SK-N-SH (cell line): ENCODE measurements at regions of chr7 and their contacts with region 1.

Region 1: GRCh38 chr7:38318803-38319416 is 45.5 kb upstream of the TARP start:
- DNase-seq: peak; percentile 67
- H3K4me3 ChIP-seq: no peak overlapping the region
- H3K27ac ChIP-seq: no peak overlapping the region
- H3K4me1 ChIP-seq: peaks cover 0 to 8% of the 10 kb centered on the region in 2 experiments; a peak in 1 of 4 replicates
- H3K27me3 ChIP-seq: no peaks in the 10 kb centered on the region
- CTCF ChIP-seq: peak; percentile 72
- EP300 ChIP-seq: no peak
- RAD21 ChIP-seq: peak; percentile 85

Region 2: DNA sequence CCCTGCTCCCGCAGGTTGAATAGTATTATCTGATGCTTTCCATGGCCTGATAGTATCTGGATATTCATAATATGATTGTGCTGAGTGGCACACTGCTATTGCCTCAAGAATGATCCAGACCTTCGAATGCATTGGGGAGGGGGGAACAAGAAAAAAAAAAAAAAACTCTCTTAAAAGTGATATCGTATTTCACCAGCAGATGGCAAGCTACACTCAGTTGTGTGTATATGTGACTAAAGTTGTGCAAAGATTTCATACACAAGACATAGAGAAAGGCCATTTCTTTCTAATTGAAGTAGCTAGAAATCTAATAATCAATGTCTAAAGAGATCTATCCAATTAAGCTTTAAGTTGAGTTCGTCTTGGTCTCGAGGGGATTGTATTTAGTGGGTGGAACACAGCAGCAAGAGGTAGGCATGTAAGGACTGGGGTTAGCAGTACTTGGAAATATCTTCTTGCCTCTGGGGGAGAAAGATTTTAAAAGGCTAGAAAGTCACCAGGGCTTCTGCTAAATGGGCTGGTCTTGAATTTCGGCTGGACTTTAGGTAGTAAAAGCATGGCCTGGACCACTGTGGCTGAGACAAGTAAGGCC is 417.6 kb before region 1 on chr7:
- CTCF ChIA-PET with region 1: interaction called, 19 read pairs
- POLR2A ChIA-PET with region 1: no interaction called
- DNase-seq: peak; percentile 47
- H3K4me3 ChIP-seq: peak overlapping the region in 1 of 2 experiments; percentile 4; a peak in 1 of 4 replicates
- H3K27ac ChIP-seq: no peak overlapping the region
- H3K4me1 ChIP-seq: peaks cover 0 to 8% of the 10 kb centered on the region in 2 experiments; a peak in 3 of 4 replicates
- H3K27me3 ChIP-seq: no peaks in the 10 kb centered on the region
- CTCF ChIP-seq: peak; percentile 83
- EP300 ChIP-seq: no peak
- RAD21 ChIP-seq: peak; percentile 85

Region 3: GRCh38 chr7:38222481-38223096 is 96.3 kb before region 1 on chr7:
- CTCF ChIA-PET with region 1: interaction called, 59 read pairs
- POLR2A ChIA-PET with region 1: no interaction called
- DNase-seq: peak; percentile 50
- H3K4me3 ChIP-seq: no peak overlapping the region; a peak in 1 of 4 replicates
- H3K27ac ChIP-seq: no peak overlapping the region
- H3K4me1 ChIP-seq: no peaks in the 10 kb centered on the region
- H3K27me3 ChIP-seq: no peaks in the 10 kb centered on the region
- CTCF ChIP-seq: peak; percentile 98
- EP300 ChIP-seq: no peak
- RAD21 ChIP-seq: peak; percentile 93

Region 4: DNA sequence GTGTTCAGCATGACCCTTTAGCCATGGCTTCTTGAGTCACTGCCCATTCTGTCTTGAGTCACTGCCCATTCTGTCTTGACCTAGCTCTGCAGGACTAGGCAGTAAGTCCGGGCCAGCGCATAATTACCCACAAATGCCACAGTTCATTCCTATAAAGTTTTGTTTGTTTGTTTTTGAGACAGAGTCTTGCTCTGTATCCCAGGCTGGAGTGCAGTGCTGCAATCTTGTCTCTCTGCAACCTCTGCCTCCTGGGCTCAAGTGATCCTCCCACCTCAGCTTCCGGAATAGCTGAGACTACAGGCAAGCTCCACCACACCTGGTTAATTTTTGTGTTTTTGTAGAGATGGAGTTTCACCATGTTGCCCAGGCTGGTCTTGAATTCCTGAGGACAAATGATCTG is 12.7 kb before region 1 on chr7:
- CTCF ChIA-PET with region 1: interaction called, 19 read pairs
- POLR2A ChIA-PET with region 1: no interaction called
- DNase-seq: no peak
- H3K4me3 ChIP-seq: no peak overlapping the region
- H3K27ac ChIP-seq: no peak overlapping the region
- H3K4me1 ChIP-seq: peaks cover 0 to 5% of the 10 kb centered on the region in 2 experiments; a peak in 1 of 4 replicates
- H3K27me3 ChIP-seq: peaks cover 17% of the 10 kb centered on the region; the same call in 1 of the 2 replicates
- CTCF ChIP-seq: no peak
- EP300 ChIP-seq: no peak
- RAD21 ChIP-seq: no peak

Region 5: GRCh38 chr7:38335492-38336147 is 16.7 kb after region 1 on chr7:
- CTCF ChIA-PET with region 1: interaction called, 66 read pairs
- POLR2A ChIA-PET with region 1: no interaction called
- DNase-seq: peak; percentile 79
- H3K4me3 ChIP-seq: peak overlapping the region in 1 of 2 experiments; percentile 25; a peak in 1 of 4 replicates
- H3K27ac ChIP-seq: no peak overlapping the region
- H3K4me1 ChIP-seq: peaks cover 0 to 2% of the 10 kb centered on the region in 2 experiments; a peak in 1 of 4 replicates
- H3K27me3 ChIP-seq: no peaks in the 10 kb centered on the region
- CTCF ChIP-seq: peak; percentile 94
- EP300 ChIP-seq: no peak
- RAD21 ChIP-seq: peak; percentile 72

Region 6: GRCh38 chr7:39027491-39027890 is 708.6 kb after region 1 on chr7:
- CTCF ChIA-PET with region 1: no interaction called
- POLR2A ChIA-PET with region 1: no interaction called
- DNase-seq: no peak
- H3K4me3 ChIP-seq: no peak overlapping the region
- H3K27ac ChIP-seq: no peak overlapping the region
- H3K4me1 ChIP-seq: no peaks in the 10 kb centered on the region
- H3K27me3 ChIP-seq: no peaks in the 10 kb centered on the region
- CTCF ChIP-seq: no peak
- EP300 ChIP-seq: no peak
- RAD21 ChIP-seq: no peak